ENCODE measurements at regions of chr10 and their contacts with region 1.

Region 1: DNA sequence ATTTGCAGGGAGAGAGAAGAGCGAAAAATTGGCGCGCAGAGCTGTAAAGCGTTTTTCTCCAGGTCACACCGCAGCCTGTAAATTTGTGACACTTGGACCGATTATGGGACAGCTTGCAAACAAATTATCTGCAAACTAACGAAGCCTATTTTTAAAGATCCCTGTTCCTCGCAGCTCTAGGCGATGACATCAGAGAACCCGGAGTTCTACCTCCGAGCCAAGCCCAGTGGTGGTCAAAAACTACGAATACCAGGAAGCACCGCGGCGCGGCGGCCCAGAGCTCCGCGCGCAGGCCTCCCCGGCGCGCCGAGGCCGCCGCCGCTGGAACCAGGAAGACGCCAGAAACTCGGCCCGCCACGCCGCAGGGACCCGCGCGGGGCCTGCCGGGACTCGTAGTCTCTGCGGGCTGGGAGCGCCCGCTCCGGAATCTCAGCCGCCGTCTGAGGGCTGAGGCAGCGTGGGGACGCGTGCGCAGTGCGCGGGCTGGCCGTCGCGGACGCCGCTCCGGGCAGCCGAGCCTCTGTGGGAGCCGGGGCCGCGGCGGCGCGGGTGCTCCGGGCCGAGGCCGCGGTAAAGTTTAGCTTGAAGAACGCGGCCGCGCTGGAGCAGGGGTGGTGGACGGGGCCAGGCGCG is at the start of gene PLEKHA1:
- DNase-seq: peak; percentile 86 to 98 (median 96)

Region 2: GRCh38 chr10:122419876-122420623 is 45.7 kb after region 1 on chr10:
- intact Hi-C with region 1: loop called (anchors 10 kb)
- DNase-seq: no peak

Region 3: GRCh38 chr10:122475100-122475499 is 100.7 kb after region 1 on chr10:
- intact Hi-C with region 1: no loop called
- DNase-seq: peak in 37 of 42 donors; percentile 56 to 87 (median 74)